ENCODE measurements at regions of chr6 and their contacts with region 1.

Region 1: GRCh38 chr6:159654483-159655098 is 38.5 kb downstream of the SOD2 start:
- DNase-seq: no peak
- H3K4me3 ChIP-seq: no peak overlapping the region
- H3K27ac ChIP-seq: no peak overlapping the region
- H3K4me1 ChIP-seq: no peaks in the 10 kb centered on the region
- H3K27me3 ChIP-seq: no peaks in the 10 kb centered on the region
- CTCF ChIP-seq: peak; percentile 19 to 51 (median 36)
- EP300 ChIP-seq: no peak
- POLR2A ChIP-seq: no peak

Region 2: GRCh38 chr6:159169193-159169555 is 485.4 kb before region 1 on chr6 and contains the start of gene FNDC1:
- intact Hi-C with region 1: loop called in 3 of 4 experiments (anchors 10 kb)
- DNase-seq: peak in 2 of 5 donors; percentile 52 to 57
- H3K4me3 ChIP-seq: peak within 1 kb of the TSS; percentile 32
- H3K27ac ChIP-seq: no peak within 1 kb of the TSS
- H3K4me1 ChIP-seq: peaks cover 3% of the 10 kb centered on the region
- H3K27me3 ChIP-seq: no peaks in the 10 kb centered on the region
- CTCF ChIP-seq: peak in 1 of 3 donors; percentile 21
- EP300 ChIP-seq: no peak
- POLR2A ChIP-seq: no peak
- total RNA-seq, gene FNDC1: 0.08 to 2.1 (median 1.1) TPM

Region 3: GRCh38 chr6:159174263-159174969 is 480.2 kb before region 1 on chr6:
- intact Hi-C with region 1: loop called in 3 of 4 experiments (anchors 10 kb)
- DNase-seq: peak; percentile 33 to 72 (median 42)
- H3K4me3 ChIP-seq: no peak overlapping the region
- H3K27ac ChIP-seq: no peak overlapping the region
- H3K4me1 ChIP-seq: no peaks in the 10 kb centered on the region
- H3K27me3 ChIP-seq: no peaks in the 10 kb centered on the region
- CTCF ChIP-seq: peak in 2 of 3 donors; percentile 19 to 57
- EP300 ChIP-seq: no peak
- POLR2A ChIP-seq: no peak

Region 4: DNA sequence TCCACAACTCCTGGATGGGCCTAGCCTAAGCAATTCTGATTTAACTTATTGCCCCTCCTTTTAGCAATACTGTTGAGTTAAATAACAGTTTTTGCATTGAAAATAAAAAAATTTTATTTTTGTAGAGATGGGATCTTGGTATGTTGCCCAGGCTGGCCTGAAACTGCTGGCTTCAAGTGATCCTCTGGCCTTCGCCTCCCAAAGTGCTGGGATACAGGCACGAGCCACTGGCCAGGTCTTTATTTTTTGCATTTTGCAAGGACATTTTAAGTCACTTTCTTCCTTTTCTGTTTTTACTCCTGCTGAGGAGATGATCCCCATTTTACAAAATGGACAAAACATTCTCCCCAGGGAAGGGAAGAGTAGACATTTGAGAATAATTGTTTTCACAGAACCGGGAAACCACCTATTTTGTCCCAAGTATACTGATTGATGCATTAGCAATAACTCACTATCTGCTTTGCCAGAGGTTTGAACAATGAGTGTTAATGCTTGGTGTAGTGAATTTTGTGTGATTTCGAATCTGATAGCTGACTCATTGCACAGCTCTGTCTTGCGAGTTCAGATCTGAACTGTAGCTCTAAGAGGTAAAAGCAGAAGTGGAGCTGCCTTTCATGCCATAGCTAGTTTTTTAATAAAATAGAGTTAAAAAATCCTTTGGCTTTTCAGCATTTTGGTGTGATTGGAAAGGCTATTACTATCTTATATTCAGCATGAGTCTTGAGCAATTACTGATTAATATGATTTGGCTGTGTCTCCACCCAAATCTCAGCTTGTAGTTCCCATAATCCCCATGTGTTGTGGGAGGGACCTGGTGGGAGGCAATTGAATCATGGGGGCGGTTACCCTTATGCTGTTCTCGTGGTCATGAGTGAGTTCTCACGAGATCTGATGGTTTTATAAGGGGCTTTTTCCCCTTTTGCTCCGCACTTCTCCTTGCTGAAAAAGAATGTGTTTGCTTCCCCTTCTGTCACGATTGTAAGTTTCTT is 335.2 kb after region 1 on chr6:
- intact Hi-C with region 1: no loop called
- DNase-seq: no peak
- H3K4me3 ChIP-seq: no peak overlapping the region
- H3K27ac ChIP-seq: no peak overlapping the region
- H3K4me1 ChIP-seq: peaks cover 30% of the 10 kb centered on the region
- H3K27me3 ChIP-seq: no peaks in the 10 kb centered on the region
- CTCF ChIP-seq: no peak
- EP300 ChIP-seq: no peak
- POLR2A ChIP-seq: no peak

Measured in ovary (tissue), 10 donors.